ENCODE measurements at regions of chr7 and their contacts with region 1.

Region 1: GRCh38 chr7:150631866-150632864 is at the start of gene GIMAP6:
- DNase-seq: peak in 8 of 9 donors; percentile 37 to 61 (median 44)
- ATAC-seq: peak; percentile 67
- H3K4me3 ChIP-seq: peak within 1 kb of the TSS; percentile 66
- H3K4me3 Mint-ChIP-seq: peak within 1 kb of the TSS; percentile 89 to 99 (median 95)
- H3K27ac ChIP-seq: peak within 1 kb of the TSS; percentile 74
- H3K27ac Mint-ChIP-seq: peak within 1 kb of the TSS; percentile 89 to 99 (median 95)
- H3K4me1 ChIP-seq: peaks cover 48 to 52% of the 10 kb centered on the region in 2 donors
- H3K4me1 Mint-ChIP-seq: peaks cover 54 to 92% (median 84%) of the 10 kb centered on the region in 7 donors
- H3K27me3 ChIP-seq: no peaks in the 10 kb centered on the region
- H3K27me3 Mint-ChIP-seq: no peaks in the 10 kb centered on the region
- total RNA-seq, gene GIMAP6: 40.3 to 173 (median 152) TPM

Region 2: GRCh38 chr7:150466477-150466876 is 165.7 kb before region 1 on chr7:
- CTCF ChIA-PET with region 1: no interaction called
- POLR2A ChIA-PET with region 1: no interaction called
- intact Hi-C with region 1: no loop called
- DNase-seq: no peak
- ATAC-seq: no peak
- H3K4me3 ChIP-seq: no peak overlapping the region
- H3K4me3 Mint-ChIP-seq: peak overlapping the region in 7 of 10 donors; percentile 46 to 91 (median 61)
- H3K27ac ChIP-seq: peak overlapping the region; percentile 34
- H3K27ac Mint-ChIP-seq: peak overlapping the region in 7 of 9 donors; percentile 70 to 97 (median 86)
- H3K4me1 ChIP-seq: peaks cover 50 to 60% of the 10 kb centered on the region in 2 donors
- H3K4me1 Mint-ChIP-seq: peaks cover 61 to 98% (median 95%) of the 10 kb centered on the region in 7 donors
- H3K27me3 ChIP-seq: no peaks in the 10 kb centered on the region
- H3K27me3 Mint-ChIP-seq: no peaks in the 10 kb centered on the region

Region 3: DNA sequence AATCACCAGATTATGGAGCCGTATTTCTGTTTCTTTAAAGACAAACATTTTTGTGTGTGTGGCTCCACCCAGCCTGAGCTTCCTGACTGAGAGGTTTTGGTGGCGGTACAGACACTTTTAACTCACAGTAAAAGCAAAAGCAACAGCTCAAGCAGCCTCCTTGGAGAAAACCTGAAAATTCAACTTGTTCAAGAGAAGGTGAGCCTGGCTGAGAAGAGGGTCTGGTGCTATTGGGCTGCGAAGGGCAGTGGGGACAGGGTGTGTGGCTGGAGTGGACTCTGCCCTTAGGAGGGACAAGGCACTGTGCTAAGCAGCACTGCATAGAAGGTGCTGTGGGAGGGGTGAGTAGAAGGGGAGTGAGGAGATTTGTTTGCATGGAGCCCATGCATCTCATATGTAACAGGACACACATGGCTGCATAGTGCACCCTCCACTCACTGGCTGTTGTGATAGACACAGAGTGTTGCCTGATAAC is 117.4 kb before region 1 on chr7 and contains the start of gene GIMAP7:
- CTCF ChIA-PET with region 1: interaction called, 5 read pairs
- POLR2A ChIA-PET with region 1: interaction called, 46 read pairs
- intact Hi-C with region 1: loop called (anchors 1 kb)
- DNase-seq: peak; percentile 38 to 90 (median 82)
- ATAC-seq: peak; percentile 86
- H3K4me3 ChIP-seq: peak within 1 kb of the TSS; percentile 94
- H3K4me3 Mint-ChIP-seq: peak within 1 kb of the TSS; percentile 93 to 100 (median 99)
- H3K27ac ChIP-seq: peak within 1 kb of the TSS; percentile 84
- H3K27ac Mint-ChIP-seq: peak within 1 kb of the TSS; percentile 94 to 99 (median 98)
- H3K4me1 ChIP-seq: peaks cover 45% of the 10 kb centered on the region in 2 donors
- H3K4me1 Mint-ChIP-seq: peaks cover 38 to 48% (median 46%) of the 10 kb centered on the region in 7 donors
- H3K27me3 ChIP-seq: no peaks in the 10 kb centered on the region
- H3K27me3 Mint-ChIP-seq: no peaks in the 10 kb centered on the region
- total RNA-seq, gene GIMAP7: 66.3 to 555 (median 321) TPM

Region 4: GRCh38 chr7:150567169-150567568 is 65.0 kb before region 1 on chr7 and contains the start of gene GIMAP4:
- CTCF ChIA-PET with region 1: interaction called, 16 read pairs
- POLR2A ChIA-PET with region 1: interaction called, 327 read pairs
- intact Hi-C with region 1: loop called (anchors 1 kb)
- DNase-seq: peak in 4 of 9 donors; percentile 21 to 53 (median 42)
- ATAC-seq: peak; percentile 58
- H3K4me3 ChIP-seq: peak within 1 kb of the TSS; percentile 92
- H3K4me3 Mint-ChIP-seq: peak within 1 kb of the TSS; percentile 87 to 99 (median 96)
- H3K27ac ChIP-seq: peak within 1 kb of the TSS; percentile 84
- H3K27ac Mint-ChIP-seq: peak within 1 kb of the TSS; percentile 92 to 99 (median 97)
- H3K4me1 ChIP-seq: peaks cover 45 to 68% of the 10 kb centered on the region in 2 donors
- H3K4me1 Mint-ChIP-seq: peaks cover 39 to 81% (median 70%) of the 10 kb centered on the region in 7 donors
- H3K27me3 ChIP-seq: no peaks in the 10 kb centered on the region
- H3K27me3 Mint-ChIP-seq: no peaks in the 10 kb centered on the region
- total RNA-seq, gene GIMAP4: 74.9 to 413 (median 406) TPM

Region 5: DNA sequence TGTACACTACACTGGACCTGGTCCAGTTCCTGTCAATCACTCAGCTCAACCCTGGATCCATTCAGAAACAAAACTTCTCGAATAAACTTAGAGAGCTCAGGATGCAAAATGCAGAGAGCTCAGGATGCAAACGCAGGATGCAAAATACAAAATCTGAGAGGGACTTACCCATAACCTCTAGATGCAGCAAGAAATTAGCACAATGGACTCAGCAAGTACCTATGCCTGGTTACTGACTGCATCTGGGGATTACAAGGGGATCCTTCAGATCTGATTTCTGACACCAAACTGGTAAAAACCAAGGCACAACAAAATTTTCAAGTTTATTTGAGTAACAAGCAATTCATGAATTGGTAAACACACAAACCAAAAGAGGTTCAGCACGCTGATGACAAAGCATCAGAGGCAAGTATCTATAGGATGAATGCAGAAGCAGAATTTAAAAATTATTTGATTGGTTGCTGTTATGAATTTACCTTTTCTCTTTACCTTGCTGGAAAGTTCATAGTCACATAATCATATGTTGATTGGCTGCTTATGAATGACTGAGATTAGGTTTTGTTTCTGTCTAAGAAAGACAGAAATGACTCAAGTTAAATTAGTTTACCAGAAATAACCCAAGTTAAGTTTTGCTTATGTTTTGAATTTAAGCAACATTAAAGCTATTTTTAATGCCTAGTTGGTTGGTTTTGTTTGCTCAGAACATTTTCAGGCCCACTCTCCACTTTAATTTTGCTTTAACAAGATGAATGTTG is 11.4 kb before region 1 on chr7:
- CTCF ChIA-PET with region 1: no interaction called
- POLR2A ChIA-PET with region 1: interaction called, 84 read pairs
- intact Hi-C with region 1: loop called (anchors 1 to 2 kb)
- DNase-seq: no peak
- ATAC-seq: no peak
- H3K4me3 ChIP-seq: no peak overlapping the region
- H3K4me3 Mint-ChIP-seq: peak overlapping the region; percentile 27 to 73 (median 54)
- H3K27ac ChIP-seq: peak overlapping the region; percentile 60
- H3K27ac Mint-ChIP-seq: peak overlapping the region; percentile 64 to 97 (median 88)
- H3K4me1 ChIP-seq: peaks cover 0 to 25% of the 10 kb centered on the region in 2 donors
- H3K4me1 Mint-ChIP-seq: peaks cover 25 to 84% (median 68%) of the 10 kb centered on the region in 7 donors
- H3K27me3 ChIP-seq: no peaks in the 10 kb centered on the region
- H3K27me3 Mint-ChIP-seq: no peaks in the 10 kb centered on the region

Region 6: DNA sequence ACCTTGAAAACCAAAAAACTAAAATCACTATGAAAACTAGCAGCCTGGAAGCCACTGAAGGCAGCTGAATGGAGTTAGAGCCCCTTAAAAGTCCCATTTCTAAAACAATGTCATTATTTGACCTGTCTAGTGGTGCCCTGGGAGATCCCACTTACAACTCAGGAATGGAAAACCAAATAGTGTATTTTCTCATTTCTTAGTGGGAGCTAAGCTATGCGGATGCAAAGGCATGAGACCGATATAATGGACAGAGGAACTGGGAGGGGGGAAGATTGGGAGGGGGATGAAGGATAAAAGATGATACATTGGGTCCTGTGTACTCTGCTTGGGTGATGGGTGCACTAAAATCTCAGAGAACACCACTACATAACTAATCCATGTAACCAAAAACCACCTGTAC is 43.5 kb after region 1 on chr7:
- CTCF ChIA-PET with region 1: interaction called, 4 read pairs
- POLR2A ChIA-PET with region 1: interaction called, 37 read pairs
- intact Hi-C with region 1: loop called in 1 of 2 experiments (anchors 1 kb)
- DNase-seq: no peak
- ATAC-seq: no peak
- H3K4me3 ChIP-seq: no peak overlapping the region
- H3K4me3 Mint-ChIP-seq: peak overlapping the region in 9 of 10 donors; percentile 34 to 93 (median 76)
- H3K27ac ChIP-seq: peak overlapping the region; percentile 71
- H3K27ac Mint-ChIP-seq: peak overlapping the region; percentile 82 to 98 (median 94)
- H3K4me1 ChIP-seq: peaks cover 38 to 52% of the 10 kb centered on the region in 2 donors
- H3K4me1 Mint-ChIP-seq: peaks cover 43 to 88% (median 78%) of the 10 kb centered on the region in 7 donors
- H3K27me3 ChIP-seq: no peaks in the 10 kb centered on the region
- H3K27me3 Mint-ChIP-seq: no peaks in the 10 kb centered on the region

Region 7: DNA sequence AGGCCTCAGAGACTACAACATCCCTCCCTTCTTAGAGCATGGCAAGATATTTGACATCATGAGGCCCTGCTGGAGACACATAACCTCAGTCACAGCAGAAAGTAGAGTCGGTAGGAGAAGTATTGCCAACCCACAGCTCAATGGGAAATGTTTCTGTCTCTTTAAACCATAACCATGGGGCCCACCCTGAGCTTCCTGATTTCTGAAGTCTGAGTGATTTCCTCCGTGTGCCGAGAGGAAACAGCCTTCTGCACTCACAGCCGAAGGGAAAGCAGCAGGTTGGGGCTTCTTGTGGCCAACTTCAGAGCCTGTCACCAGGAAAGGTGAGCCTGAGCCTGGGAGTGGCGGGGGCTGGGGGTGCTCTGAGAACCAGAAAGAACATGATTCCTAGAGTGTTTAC is 84.2 kb after region 1 on chr7 and contains the start of gene GIMAP1:
- CTCF ChIA-PET with region 1: interaction called, 8 read pairs
- POLR2A ChIA-PET with region 1: interaction called, 98 read pairs
- intact Hi-C with region 1: loop called (anchors 1 kb)
- DNase-seq: peak in 8 of 9 donors; percentile 14 to 85 (median 81)
- ATAC-seq: peak; percentile 90
- H3K4me3 ChIP-seq: peak within 1 kb of the TSS; percentile 88
- H3K4me3 Mint-ChIP-seq: peak within 1 kb of the TSS; percentile 89 to 100 (median 98)
- H3K27ac ChIP-seq: peak within 1 kb of the TSS; percentile 86
- H3K27ac Mint-ChIP-seq: peak within 1 kb of the TSS; percentile 76 to 98 (median 95)
- H3K4me1 ChIP-seq: peaks cover 39 to 46% of the 10 kb centered on the region in 2 donors
- H3K4me1 Mint-ChIP-seq: peaks cover 38 to 77% (median 61%) of the 10 kb centered on the region in 7 donors
- H3K27me3 ChIP-seq: no peaks in the 10 kb centered on the region
- H3K27me3 Mint-ChIP-seq: no peaks in the 10 kb centered on the region
- total RNA-seq, gene GIMAP1: 23.3 to 124 (median 32.6) TPM

Region 8: GRCh38 chr7:150748376-150748775 is 116.2 kb after region 1 on chr7:
- CTCF ChIA-PET with region 1: no interaction called
- POLR2A ChIA-PET with region 1: interaction called, 152 read pairs
- intact Hi-C with region 1: loop called in 1 of 2 experiments (anchors 2 kb)
- DNase-seq: no peak
- ATAC-seq: peak; percentile 62
- H3K4me3 ChIP-seq: peak overlapping the region; percentile 17
- H3K4me3 Mint-ChIP-seq: peak overlapping the region; percentile 21 to 100 (median 88)
- H3K27ac ChIP-seq: peak overlapping the region; percentile 82
- H3K27ac Mint-ChIP-seq: peak overlapping the region; percentile 86 to 97 (median 95)
- H3K4me1 ChIP-seq: peaks cover 60 to 83% of the 10 kb centered on the region in 2 donors
- H3K4me1 Mint-ChIP-seq: peaks cover 46 to 97% (median 94%) of the 10 kb centered on the region in 7 donors
- H3K27me3 ChIP-seq: no peaks in the 10 kb centered on the region
- H3K27me3 Mint-ChIP-seq: no peaks in the 10 kb centered on the region

Region 9: DNA sequence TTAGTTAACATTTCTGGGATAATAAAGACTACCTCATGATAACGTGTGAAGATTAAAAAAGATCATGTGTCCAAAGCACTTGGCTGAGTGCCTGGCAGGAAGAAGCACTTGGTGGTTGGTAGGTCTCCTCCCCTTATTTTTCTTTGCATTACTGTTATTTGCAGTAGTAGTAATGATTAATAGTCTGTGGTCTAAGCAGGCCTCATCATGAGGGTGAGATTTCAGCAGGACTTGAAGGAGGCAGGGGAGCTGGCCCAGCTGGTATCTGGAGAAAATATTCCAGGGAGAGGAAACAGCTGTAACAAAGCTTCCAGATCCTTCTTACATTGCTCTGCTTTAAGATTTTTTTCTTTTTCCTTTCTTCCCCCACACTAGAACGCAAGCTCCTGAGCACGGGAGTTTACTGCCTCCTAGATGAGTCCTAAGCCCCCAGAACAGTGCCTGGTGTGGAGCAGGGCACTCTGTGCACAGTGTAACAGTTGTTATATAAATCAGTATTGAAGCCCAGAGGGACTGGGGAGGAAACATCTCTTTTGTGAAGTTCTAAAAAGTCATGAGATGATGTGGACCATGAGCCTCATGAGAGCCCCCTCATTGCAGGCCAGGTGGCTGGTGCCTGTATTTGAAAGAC is 918.6 kb after region 1 on chr7:
- CTCF ChIA-PET with region 1: no interaction called
- POLR2A ChIA-PET with region 1: no interaction called
- intact Hi-C with region 1: no loop called
- DNase-seq: no peak
- ATAC-seq: no peak
- H3K4me3 ChIP-seq: no peak overlapping the region
- H3K4me3 Mint-ChIP-seq: no peak overlapping the region
- H3K27ac ChIP-seq: no peak overlapping the region
- H3K27ac Mint-ChIP-seq: peak overlapping the region in 1 of 9 donors; percentile 27
- H3K4me1 ChIP-seq: no peaks in the 10 kb centered on the region
- H3K4me1 Mint-ChIP-seq: peaks cover 0 to 15% (median 8%) of the 10 kb centered on the region in 7 donors
- H3K27me3 ChIP-seq: no peaks in the 10 kb centered on the region
- H3K27me3 Mint-ChIP-seq: peaks cover 4 to 19% (median 8%) of the 10 kb centered on the region in 5 donors